Posterior cingulate gyrus (tissue), 11 donors: ENCODE measurements at regions of chr22 and their contacts with region 1.

Region 1: DNA sequence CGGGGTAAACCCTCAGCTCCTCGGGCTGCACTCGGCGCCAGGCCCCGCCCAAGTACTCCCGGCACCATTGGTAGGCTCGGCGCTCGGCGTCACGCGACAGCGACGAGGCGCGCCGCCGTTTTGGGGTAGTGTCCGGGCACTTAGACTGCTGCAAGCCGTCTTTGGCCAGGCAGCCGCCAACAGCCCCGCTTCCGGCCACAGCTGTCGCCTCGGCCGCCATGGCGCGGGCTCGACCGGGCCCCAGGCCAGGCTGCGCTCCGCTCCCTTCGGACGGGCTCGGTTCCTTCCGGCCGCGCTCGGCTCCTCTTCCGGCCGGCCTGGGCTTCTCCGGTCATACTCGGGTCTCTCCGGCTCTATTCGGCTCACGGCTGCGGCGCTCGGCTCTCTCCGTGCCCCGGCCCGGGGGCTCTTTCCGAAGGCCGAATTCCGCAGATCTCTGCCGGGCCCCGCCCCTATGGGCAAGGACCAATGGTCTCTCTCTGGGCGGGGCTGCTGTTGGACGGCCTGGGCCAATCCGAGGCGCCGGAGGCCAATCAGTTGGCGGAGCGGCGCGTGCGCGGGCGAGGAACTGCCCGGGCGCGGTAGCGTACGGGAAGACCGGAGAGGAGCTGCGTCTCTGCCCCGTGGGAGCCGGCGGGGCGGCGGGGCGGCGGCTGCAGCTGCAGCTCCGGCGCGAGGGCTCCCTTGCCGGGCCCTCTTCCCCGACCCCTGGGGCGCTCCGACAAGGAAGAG is at the start of gene CHKB:
- DNase-seq: peak; percentile 97 to 100 (median 99)

Region 2: DNA sequence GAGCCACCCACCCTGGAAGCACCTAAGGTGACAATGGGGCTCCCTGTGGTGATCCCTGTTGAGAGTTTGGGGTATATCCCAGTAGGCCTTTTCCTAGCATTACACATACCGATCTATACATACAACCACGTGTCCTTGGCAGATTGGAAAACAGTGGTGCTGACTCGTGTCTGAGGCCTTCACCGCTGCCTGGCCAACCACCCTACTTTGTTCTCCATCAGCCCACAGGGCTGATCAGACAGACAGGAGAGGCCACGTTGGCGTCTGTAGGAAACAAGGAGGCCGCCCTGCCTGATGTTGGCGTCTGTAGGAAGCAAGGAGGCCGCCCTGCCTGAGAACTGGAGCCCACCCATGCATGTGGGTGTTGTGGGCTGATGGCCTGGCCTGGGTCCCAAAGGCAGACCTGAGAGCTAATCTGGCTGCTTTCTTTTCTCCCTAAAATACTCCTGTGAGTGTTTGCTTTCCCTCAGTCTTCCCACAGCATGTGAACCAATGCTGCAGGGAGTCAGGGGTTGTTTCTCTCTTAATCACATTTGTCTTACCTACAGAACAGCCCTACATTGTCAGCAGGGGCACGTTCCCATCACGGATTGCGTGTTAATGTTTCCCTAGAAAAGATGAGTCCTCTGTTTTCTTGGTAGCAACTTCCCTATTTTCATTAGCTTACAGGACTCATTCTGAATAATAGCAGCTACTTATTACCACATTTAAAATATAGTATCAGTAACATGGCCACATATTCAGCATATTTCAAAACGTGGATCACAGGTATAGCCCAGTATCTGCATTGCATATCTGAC is 165.1 kb before region 1 on chr22:
- intact Hi-C with region 1: no loop called
- DNase-seq: peak in 1 of 10 donors; percentile 81

Region 3: DNA sequence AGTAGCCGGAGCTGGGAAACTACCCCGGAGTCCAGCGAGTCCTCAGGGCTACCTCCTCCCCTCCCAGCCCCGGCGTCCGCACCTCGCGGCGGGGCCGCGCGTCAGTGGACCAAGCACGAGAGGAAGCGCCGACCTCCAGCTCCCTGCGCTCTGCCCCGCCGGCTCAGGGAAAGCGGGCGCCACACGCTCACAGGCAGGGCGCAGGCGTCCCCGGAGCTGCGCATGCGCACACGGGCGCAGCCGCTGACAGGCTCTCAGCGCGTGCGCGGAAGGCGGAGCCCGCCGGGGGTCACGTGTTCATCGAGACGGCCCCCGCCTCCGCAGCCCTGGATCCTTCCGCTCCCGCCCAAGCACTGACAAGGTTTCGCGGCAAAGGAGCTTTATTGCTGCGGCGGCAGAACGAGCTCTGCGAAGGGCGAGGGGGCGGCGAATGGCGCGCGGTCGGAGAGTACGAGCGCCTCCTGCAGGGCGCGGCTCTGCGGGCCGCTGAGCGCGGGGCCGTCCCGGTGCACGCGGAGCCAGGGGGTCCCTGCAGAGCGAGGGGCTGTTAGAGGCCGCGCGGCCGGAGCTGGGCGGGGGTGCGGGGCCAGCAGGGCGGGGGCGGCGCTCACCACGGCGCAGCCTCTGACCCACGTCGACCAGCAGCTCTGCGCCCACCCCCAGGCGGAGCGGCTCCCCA is 57.2 kb before region 1 on chr22 and contains the start of gene SCO2:
- intact Hi-C with region 1: loop called (anchors 1 kb)
- DNase-seq: peak; percentile 90 to 99 (median 92)

Region 4: GRCh38 chr22:50562523-50563412 is 20.0 kb before region 1 on chr22 and contains the start of gene SYCE3:
- intact Hi-C with region 1: loop called (anchors 2 kb)
- DNase-seq: peak; percentile 93 to 100 (median 98)

Region 5: GRCh38 chr22:50620593-50621355 is 38.0 kb after region 1 on chr22:
- intact Hi-C with region 1: loop called (anchors 5 kb)
- DNase-seq: peak in 4 of 10 donors; percentile 71 to 94 (median 85)